ENCODE measurements at regions of chr16 and their contacts with region 1.

Region 1: DNA sequence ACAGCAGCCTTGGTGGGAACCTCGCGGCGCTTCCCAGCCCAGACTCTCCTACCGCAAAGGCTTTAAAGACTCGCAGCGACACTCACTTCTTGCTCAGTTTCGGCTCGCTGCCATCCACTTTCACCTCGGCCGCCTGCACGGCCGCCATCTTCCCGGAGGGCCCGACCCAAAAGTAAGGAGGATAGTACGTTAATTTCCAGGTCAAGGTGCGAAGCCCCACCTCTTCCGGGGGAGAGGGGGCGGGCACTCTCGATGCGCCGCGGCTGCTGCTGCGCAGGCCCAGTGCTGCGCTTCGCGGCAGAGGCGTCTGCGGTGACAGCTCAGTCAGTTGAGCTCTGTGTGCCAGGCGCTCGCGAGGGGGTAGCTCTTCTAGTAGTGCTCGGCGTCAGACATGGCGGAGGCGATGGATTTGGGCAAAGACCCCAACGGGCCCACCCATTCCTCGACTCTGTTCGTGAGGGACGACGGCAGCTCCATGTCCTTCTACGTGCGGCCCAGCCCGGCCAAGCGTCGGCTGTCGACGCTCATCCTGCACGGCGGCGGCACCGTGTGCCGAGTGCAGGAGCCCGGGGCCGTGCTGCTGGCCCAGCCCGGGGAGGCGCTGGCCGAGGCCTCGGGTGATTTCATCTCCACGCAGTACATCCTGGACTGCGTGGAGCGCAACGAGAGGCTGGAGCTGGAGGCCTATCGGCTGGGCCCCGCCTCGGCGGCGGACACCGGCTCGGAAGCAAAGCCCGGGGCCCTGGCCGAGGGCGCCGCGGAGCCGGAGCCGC is at the starts of genes KARS1 and TERF2IP:
- DNase-seq: peak; percentile 86 to 96 (median 96)
- ATAC-seq: peak; percentile 93
- H3K4me3 ChIP-seq: peak within 1 kb of the TSS; percentile 97
- H3K4me3 Mint-ChIP-seq: peak within 1 kb of the TSS; percentile 90 to 100 (median 99)
- H3K27ac ChIP-seq: peak within 1 kb of the TSS; percentile 97
- H3K27ac Mint-ChIP-seq: peak within 1 kb of the TSS; percentile 96 to 100 (median 99)
- H3K4me1 ChIP-seq: peaks cover 36 to 48% of the 10 kb centered on the region in 2 donors
- H3K4me1 Mint-ChIP-seq: peaks cover 35 to 76% (median 67%) of the 10 kb centered on the region in 7 donors
- H3K27me3 ChIP-seq: no peaks in the 10 kb centered on the region
- H3K27me3 Mint-ChIP-seq: no peaks in the 10 kb centered on the region
- total RNA-seq, gene KARS1: 118 to 216 (median 123) TPM
- total RNA-seq, gene TERF2IP: 70.8 to 90.4 (median 88.7) TPM

Region 2: GRCh38 chr16:74296432-74297144 is 1351.1 kb before region 1 on chr16 and contains the start of gene PSMD7:
- CTCF ChIA-PET with region 1: no interaction called
- POLR2A ChIA-PET with region 1: interaction called, 3 read pairs
- intact Hi-C with region 1: loop called in 1 of 2 experiments (anchors 5 kb)
- DNase-seq: peak; percentile 82 to 93 (median 90)
- ATAC-seq: peak; percentile 96
- H3K4me3 ChIP-seq: peak within 1 kb of the TSS; percentile 86
- H3K4me3 Mint-ChIP-seq: peak within 1 kb of the TSS; percentile 89 to 99 (median 96)
- H3K27ac ChIP-seq: peak within 1 kb of the TSS; percentile 96
- H3K27ac Mint-ChIP-seq: peak within 1 kb of the TSS; percentile 93 to 100 (median 98)
- H3K4me1 ChIP-seq: peaks cover 22 to 25% of the 10 kb centered on the region in 2 donors
- H3K4me1 Mint-ChIP-seq: peaks cover 21 to 52% (median 38%) of the 10 kb centered on the region in 7 donors
- H3K27me3 ChIP-seq: no peaks in the 10 kb centered on the region
- H3K27me3 Mint-ChIP-seq: no peaks in the 10 kb centered on the region
- total RNA-seq, gene PSMD7: 61.1 to 107 (median 71.3) TPM

Region 3: DNA sequence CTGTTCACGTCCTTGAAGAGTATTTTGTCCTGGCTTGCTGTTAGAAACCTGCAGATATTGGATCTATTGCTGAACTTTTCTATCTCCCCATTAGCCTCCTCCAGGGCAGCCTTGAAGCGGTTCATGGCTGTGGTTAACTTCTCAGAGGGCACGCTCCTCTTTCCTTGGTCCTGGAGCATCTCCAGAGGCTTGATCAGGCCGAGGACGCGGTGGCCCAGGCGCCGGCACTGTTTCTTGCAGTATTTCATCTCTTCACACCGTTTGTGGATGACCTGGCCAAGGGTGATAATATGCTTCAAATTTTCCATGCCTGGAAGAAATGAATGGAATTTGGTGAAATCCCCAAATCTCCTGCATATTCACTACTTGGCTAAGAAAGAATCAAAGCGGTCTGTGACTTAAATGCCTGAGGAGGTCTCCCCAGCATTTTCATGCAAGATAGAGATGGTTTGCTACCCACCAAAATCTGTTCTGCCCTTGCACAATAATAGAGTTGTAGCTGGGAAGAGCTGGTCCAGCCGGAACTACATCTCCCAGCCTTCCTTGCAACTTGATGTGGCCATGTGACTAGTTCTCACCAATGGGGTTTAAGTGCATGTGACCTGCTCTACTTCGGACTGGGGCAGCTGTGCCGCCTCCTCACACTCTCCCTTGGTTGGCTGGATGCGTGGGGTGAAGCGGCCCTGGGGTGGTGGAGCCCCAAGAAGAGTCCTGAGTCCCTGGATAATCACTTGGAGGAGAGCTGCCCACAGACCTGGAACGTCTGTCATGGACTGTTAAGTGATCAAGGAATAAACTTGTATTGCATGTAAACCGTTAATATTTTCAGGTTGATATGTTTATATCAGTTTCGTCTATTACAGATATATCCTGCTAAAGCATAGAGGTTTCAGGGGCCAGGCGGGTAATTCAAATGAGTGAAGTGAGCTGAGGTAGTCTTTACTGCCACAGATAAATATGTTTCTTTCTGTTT is 951.9 kb before region 1 on chr16:
- CTCF ChIA-PET with region 1: no interaction called
- POLR2A ChIA-PET with region 1: interaction called, 4 read pairs
- intact Hi-C with region 1: loop called in 1 of 2 experiments (anchors 5 kb)
- DNase-seq: peak; percentile 33 to 67 (median 51)
- ATAC-seq: peak; percentile 89
- H3K4me3 ChIP-seq: peak overlapping the region; percentile 45
- H3K4me3 Mint-ChIP-seq: peak overlapping the region; percentile 74 to 94 (median 85)
- H3K27ac ChIP-seq: peak overlapping the region; percentile 45
- H3K27ac Mint-ChIP-seq: peak overlapping the region in 8 of 9 donors; percentile 43 to 87 (median 80)
- H3K4me1 ChIP-seq: peaks cover 14 to 24% of the 10 kb centered on the region in 2 donors
- H3K4me1 Mint-ChIP-seq: peaks cover 35 to 74% (median 59%) of the 10 kb centered on the region in 7 donors
- H3K27me3 ChIP-seq: no peaks in the 10 kb centered on the region
- H3K27me3 Mint-ChIP-seq: no peaks in the 10 kb centered on the region

Region 4: GRCh38 chr16:75432828-75433731 is 214.6 kb before region 1 on chr16 and contains the start of gene CFDP1:
- CTCF ChIA-PET with region 1: no interaction called
- POLR2A ChIA-PET with region 1: interaction called, 21 read pairs
- intact Hi-C with region 1: loop called (anchors 1 kb)
- DNase-seq: peak; percentile 93 to 98 (median 95)
- ATAC-seq: peak; percentile 92
- H3K4me3 ChIP-seq: peak within 1 kb of the TSS; percentile 92
- H3K4me3 Mint-ChIP-seq: peak within 1 kb of the TSS; percentile 87 to 99 (median 94)
- H3K27ac ChIP-seq: peak within 1 kb of the TSS; percentile 94
- H3K27ac Mint-ChIP-seq: peak within 1 kb of the TSS; percentile 94 to 100 (median 97)
- H3K4me1 ChIP-seq: peaks cover 5 to 9% of the 10 kb centered on the region in 2 donors
- H3K4me1 Mint-ChIP-seq: peaks cover 19 to 53% (median 43%) of the 10 kb centered on the region in 7 donors
- H3K27me3 ChIP-seq: no peaks in the 10 kb centered on the region
- H3K27me3 Mint-ChIP-seq: no peaks in the 10 kb centered on the region
- total RNA-seq, gene CFDP1: 34.9 to 41.4 (median 39.4) TPM

Region 5: DNA sequence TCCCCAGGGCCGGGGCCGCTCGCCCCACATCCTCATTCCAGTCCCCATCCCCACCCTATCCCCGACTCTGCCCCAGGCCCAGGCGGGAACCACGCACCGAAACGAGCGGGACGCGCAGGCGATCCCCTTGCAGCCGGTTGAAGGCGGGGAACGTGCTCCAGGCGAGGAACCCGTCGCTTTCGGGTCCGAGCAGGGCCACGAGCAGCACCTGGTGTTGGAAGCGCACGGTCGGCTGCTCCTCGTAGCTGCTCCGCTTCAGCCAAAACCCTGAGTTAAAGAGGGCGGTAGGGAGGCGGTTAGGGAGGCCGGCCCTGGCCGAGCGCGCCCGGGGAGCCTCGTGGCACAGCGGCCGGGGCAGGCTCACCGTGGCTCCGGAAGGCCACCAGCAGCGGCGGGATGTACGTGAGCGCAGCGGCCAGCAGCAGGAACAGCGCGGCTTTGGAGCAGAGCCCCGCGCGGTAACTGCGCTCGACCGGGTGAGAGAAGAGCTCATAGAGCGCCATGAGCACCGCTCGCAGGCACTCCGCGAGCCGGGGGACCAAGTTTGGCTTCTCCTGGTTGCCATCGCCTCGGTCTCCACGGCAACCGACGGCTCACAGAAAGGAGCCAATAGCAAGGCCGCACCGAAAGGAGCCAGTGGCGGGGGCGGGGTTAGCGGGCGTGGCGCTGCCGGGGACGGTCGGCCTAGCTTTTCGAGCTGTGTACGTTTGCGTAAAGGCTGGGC is 91.8 kb before region 1 on chr16 and contains the start of gene TMEM231:
- CTCF ChIA-PET with region 1: interaction called, 3 read pairs
- POLR2A ChIA-PET with region 1: interaction called, 16 read pairs
- intact Hi-C with region 1: loop called (anchors 1 kb)
- DNase-seq: peak; percentile 91 to 97 (median 93)
- ATAC-seq: peak; percentile 98
- H3K4me3 ChIP-seq: peak within 1 kb of the TSS; percentile 84
- H3K4me3 Mint-ChIP-seq: peak within 1 kb of the TSS; percentile 74 to 93 (median 88)
- H3K27ac ChIP-seq: peak within 1 kb of the TSS; percentile 66
- H3K27ac Mint-ChIP-seq: peak within 1 kb of the TSS; percentile 81 to 97 (median 89)
- H3K4me1 ChIP-seq: peaks cover 10% of the 10 kb centered on the region in 2 donors
- H3K4me1 Mint-ChIP-seq: peaks cover 5 to 14% (median 10%) of the 10 kb centered on the region in 7 donors
- H3K27me3 ChIP-seq: no peaks in the 10 kb centered on the region
- H3K27me3 Mint-ChIP-seq: peaks cover 0 to 33% (median 5%) of the 10 kb centered on the region in 5 donors
- total RNA-seq, gene TMEM231: 1.5 to 3.9 (median 3.4) TPM

Region 6: DNA sequence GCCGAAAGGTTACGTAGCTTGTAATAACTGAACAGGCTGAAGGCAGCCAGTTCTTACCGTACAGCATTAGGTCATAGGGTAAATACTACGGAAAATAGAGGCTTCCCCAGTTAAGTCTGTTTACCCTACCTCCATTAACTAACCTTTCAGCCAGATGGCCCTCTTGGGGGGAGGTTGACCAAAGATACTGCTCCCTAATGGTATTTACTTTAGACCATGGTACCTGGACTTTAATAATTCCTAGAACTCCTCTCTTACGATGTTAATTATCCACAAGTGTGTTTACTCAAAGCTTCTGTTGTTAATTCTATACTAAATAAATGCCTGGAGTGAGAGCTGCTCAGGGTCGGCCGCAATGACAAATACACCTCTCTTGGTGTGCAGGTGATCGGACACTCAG is 14.8 kb before region 1 on chr16:
- CTCF ChIA-PET with region 1: no interaction called
- POLR2A ChIA-PET with region 1: interaction called, 63 read pairs
- intact Hi-C with region 1: no loop called
- DNase-seq: no peak
- ATAC-seq: no peak
- H3K4me3 ChIP-seq: no peak overlapping the region
- H3K4me3 Mint-ChIP-seq: no peak overlapping the region
- H3K27ac ChIP-seq: no peak overlapping the region
- H3K27ac Mint-ChIP-seq: no peak overlapping the region
- H3K4me1 ChIP-seq: peaks cover 11% of the 10 kb centered on the region in 2 donors
- H3K4me1 Mint-ChIP-seq: peaks cover 15 to 24% (median 18%) of the 10 kb centered on the region in 7 donors
- H3K27me3 ChIP-seq: no peaks in the 10 kb centered on the region
- H3K27me3 Mint-ChIP-seq: no peaks in the 10 kb centered on the region

Region 7: DNA sequence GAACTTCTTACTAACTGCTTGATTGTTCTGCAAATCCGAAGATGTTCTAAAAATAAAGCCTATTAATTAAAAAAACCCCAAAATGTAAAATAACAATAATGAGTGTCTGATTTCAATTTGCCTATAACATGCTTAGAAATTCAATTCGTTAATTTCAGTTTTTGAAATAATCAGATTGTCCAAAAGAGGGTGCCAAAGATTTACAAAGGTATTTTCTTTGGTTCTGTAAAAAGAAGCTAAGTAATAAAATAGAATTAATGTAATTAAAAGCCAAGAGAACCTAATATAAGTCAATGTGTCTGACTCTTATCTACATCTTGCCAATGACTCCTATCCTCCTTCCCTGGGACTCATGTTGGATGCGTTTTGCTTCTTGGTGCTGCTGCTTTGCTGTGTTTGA is 153.6 kb after region 1 on chr16:
- CTCF ChIA-PET with region 1: no interaction called
- POLR2A ChIA-PET with region 1: no interaction called
- intact Hi-C with region 1: no loop called
- DNase-seq: no peak
- ATAC-seq: no peak
- H3K4me3 ChIP-seq: no peak overlapping the region
- H3K4me3 Mint-ChIP-seq: no peak overlapping the region
- H3K27ac ChIP-seq: no peak overlapping the region
- H3K27ac Mint-ChIP-seq: no peak overlapping the region
- H3K4me1 ChIP-seq: no peaks in the 10 kb centered on the region
- H3K4me1 Mint-ChIP-seq: no peaks in the 10 kb centered on the region
- H3K27me3 ChIP-seq: no peaks in the 10 kb centered on the region
- H3K27me3 Mint-ChIP-seq: peaks cover 0 to 41% (median 34%) of the 10 kb centered on the region in 5 donors

Region 8: DNA sequence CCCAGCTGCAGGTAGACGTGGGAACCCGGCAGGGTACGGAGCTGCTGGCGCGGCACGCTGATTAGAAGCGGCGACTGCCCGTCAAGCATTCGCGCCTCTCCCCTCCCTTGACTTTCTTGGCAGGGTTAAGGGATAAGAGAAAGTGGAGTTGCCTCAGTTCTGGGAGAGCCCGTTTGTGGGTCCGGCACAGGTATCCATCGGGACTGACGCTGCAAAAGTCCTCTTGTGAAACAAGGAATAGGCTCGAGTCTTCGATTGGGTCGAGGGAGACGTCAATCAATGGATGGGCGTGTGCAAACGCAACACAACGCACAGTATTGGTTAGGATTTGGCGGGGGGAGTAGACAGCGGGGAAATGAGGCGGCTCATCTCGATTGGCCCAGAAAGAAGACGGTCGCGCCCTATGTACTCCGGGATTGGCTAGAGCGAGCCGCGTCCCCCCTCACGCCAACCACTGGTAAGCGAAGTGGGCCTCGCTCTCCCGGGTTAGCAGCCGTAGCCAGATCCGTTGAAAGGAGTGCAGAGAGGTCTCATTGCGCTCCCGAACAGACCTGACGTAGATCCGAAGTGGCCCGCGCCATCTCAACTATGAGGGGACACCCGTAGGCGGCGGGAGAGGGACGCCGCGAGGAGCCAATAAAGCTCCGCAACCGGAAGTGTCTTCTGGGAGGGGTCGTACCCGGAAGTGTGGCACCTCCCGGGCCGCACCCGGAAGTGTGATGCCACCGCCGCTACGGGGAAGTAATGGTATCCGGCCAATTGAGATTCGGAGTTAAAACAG is 1543.0 kb after region 1 on chr16 and contains the start of gene MON1B:
- CTCF ChIA-PET with region 1: no interaction called
- POLR2A ChIA-PET with region 1: interaction called, 5 read pairs
- intact Hi-C with region 1: loop called (anchors 1 kb)
- DNase-seq: peak; percentile 86 to 98 (median 97)
- ATAC-seq: peak; percentile 96
- H3K4me3 ChIP-seq: peak within 1 kb of the TSS; percentile 97
- H3K4me3 Mint-ChIP-seq: peak within 1 kb of the TSS; percentile 90 to 99 (median 96)
- H3K27ac ChIP-seq: peak within 1 kb of the TSS; percentile 86
- H3K27ac Mint-ChIP-seq: peak within 1 kb of the TSS; percentile 98 to 100 (median 100)
- H3K4me1 ChIP-seq: peaks cover 13 to 23% of the 10 kb centered on the region in 2 donors
- H3K4me1 Mint-ChIP-seq: peaks cover 36 to 55% (median 46%) of the 10 kb centered on the region in 7 donors
- H3K27me3 ChIP-seq: no peaks in the 10 kb centered on the region
- H3K27me3 Mint-ChIP-seq: peaks cover 0 to 10% (median 4%) of the 10 kb centered on the region in 5 donors
- total RNA-seq, gene MON1B: 60.8 to 87.2 (median 67.3) TPM